IMR-90 (cell line): ENCODE measurements at regions of chr1 and their contacts with region 1.

Region 1: DNA sequence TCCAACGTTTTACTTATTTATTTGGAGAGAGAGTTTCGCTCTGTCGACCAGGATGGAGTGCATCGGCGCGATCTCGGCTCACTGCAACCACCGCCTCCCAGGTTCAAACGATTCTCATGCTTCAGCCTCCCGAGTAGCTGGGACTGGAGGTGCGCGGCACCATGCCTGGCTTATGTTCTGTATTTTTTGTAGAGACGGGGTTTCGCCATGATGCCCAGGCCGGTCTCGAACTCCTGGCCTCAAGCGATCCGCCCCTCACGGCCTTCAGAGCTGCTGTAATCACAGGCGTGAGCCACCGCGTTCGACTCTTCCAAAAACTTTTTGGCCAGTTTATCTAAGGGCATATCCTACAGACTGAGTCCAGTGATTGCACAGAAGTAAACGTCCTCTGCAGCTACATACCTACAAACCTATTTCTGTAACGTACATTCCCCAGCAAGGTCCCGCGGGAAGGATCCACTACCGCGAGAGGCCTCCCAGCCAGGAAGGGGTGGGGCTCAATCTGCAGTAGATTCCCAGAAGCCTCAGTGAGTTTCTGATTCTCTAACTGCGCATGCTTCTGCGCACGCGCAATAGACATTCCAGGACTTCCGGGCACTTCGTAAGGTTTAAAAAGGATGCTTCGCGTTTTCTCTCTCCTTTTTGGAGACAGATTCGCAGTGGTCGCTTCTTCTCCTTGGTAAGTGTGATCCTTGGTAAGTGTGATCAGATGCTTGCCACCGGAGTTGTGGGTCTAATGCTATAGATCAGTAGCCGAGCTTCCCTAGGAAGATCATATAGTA is at the start of gene RCC1:
- DNase-seq: peak; percentile 99
- ATAC-seq: peak; percentile 87
- H3K4me3 ChIP-seq: peak within 1 kb of the TSS; percentile 88
- H3K27ac ChIP-seq: peak within 1 kb of the TSS; percentile 81
- H3K4me1 ChIP-seq: peaks cover 13% of the 10 kb centered on the region
- H3K27me3 ChIP-seq: no peaks in the 10 kb centered on the region
- CTCF ChIP-seq: no peak
- POLR2A ChIP-seq: peak; percentile 100
- RAD21 ChIP-seq: no peak
- total RNA-seq, gene RCC1: 33.9 and 43.9 TPM in 2 replicates

Region 2: DNA sequence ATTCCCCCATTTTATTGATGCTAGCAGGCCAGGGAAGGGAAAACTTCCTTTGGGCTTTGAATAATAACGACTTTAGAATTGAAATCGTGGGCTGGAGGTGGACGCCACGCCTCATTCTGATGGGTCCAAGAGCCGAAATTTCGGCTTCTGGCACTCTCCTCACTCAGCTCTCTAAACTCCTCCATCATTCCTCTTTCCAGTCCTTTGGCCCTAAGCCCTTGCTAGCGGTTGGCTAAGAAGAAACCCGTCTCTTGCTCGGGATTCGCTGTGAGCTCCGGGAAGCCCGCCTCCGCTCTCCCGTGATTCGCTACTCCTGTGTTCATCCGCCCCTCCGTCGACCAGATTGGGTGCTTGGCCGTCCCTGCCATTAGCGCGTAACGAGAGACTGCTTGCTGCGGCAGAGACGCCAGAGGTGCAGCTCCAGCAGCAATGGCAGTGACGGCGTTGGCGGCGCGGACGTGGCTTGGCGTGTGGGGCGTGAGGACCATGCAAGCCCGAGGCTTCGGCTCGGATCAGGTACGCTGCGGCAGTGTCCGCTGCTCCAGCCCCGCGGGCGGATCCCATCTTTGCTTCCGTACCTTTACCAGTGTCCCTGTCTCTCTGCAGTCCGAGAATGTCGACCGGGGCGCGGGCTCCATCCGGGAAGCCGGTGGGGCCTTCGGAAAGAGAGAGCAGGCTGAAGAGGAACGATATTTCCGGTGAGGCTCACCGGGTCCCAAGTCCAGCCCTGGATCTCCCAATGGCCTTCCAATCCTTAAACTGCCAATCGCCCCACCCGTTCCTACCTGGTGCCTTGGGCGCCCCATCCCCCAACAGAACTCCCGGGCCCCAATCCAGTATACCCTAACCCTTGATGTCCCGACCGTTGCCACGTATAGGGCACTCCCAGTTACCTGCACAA is 269.6 kb before region 1 on chr1 and contains the start of gene ATP5IF1:
- CTCF ChIA-PET with region 1: no interaction called
- POLR2A ChIA-PET with region 1: no interaction called
- dilution Hi-C with region 1: no loop called
- in situ Hi-C with region 1: no loop called
- intact Hi-C with region 1: no loop called
- DNase-seq: peak; percentile 97
- ATAC-seq: peak; percentile 95
- H3K4me3 ChIP-seq: peak within 1 kb of the TSS; percentile 78
- H3K27ac ChIP-seq: peak within 1 kb of the TSS; percentile 68
- H3K4me1 ChIP-seq: peaks cover 2% of the 10 kb centered on the region
- H3K27me3 ChIP-seq: no peaks in the 10 kb centered on the region
- CTCF ChIP-seq: no peak
- POLR2A ChIP-seq: peak; percentile 89
- RAD21 ChIP-seq: no peak
- total RNA-seq, gene ATP5IF1: 33.7 and 120 TPM in 2 replicates

Region 3: DNA sequence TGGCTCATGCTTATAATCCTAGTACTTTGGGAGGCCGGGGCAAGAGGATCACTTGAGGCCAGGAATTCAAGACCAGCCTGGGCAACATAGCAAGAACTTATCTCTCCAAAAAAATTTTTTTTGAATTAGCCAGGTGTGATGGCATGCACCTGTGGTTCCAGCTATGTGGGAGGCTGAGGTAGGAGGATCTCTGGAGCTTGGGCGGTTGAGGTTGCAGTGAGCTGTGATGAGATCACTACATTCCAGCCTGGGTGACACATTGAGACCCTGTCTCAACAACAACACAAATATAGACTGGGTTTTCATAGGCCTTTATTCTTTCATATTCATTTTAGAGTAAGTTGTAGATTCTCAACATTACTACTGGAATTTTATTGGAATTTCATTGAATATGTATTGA is 164.0 kb before region 1 on chr1:
- CTCF ChIA-PET with region 1: no interaction called
- POLR2A ChIA-PET with region 1: interaction called, 10 read pairs
- dilution Hi-C with region 1: no loop called
- in situ Hi-C with region 1: no loop called
- intact Hi-C with region 1: no loop called
- DNase-seq: peak; percentile 45
- ATAC-seq: no peak
- H3K4me3 ChIP-seq: no peak overlapping the region
- H3K27ac ChIP-seq: no peak overlapping the region
- H3K4me1 ChIP-seq: no peaks in the 10 kb centered on the region
- H3K27me3 ChIP-seq: no peaks in the 10 kb centered on the region
- CTCF ChIP-seq: no peak
- POLR2A ChIP-seq: no peak
- RAD21 ChIP-seq: no peak

Region 4: DNA sequence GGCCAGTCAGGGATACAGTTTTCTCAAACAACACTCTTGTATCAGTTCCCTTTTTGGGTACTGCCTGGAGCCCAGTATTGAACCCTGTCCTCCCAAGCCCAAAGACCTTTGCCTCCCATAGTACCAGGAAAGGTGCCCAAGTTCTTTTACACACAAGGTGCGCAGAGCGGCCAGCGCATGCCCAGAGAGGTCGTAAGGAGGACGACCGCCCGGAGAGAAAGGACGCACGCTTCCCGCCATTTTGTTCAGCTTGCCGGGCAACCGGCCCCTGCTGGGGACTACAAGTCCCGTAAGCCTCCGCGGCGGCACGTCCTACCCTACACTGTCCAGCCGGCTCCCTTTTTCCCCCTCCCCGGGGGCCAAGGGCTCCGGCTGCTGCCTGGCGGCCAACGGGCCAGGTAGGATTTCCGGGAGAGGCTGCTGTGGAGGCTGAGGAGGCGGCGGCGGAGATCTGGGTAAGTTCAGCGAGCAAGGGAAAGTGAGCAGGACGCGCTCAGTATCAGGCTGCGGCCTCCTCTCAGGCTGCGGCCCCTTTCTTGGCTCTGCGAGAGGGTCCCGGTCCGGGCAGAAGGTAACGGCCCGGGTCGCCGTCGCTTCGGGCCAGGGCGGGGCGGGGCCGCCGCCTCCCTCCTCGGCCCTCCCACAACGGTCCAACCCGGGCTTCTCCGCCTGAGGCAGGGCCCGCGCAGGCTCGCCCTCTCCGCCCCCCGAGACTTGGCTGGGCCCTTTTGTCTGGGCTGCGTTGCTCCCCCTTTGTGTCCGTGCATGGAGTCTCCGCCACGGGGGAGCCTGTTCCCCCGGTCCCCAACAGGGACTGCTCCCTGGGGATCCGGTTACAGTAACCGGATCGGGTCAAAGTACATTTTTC is 136.0 kb before region 1 on chr1 and contains the start of gene PHACTR4:
- CTCF ChIA-PET with region 1: no interaction called
- POLR2A ChIA-PET with region 1: interaction called, 11 read pairs
- dilution Hi-C with region 1: no loop called
- in situ Hi-C with region 1: no loop called
- intact Hi-C with region 1: no loop called
- DNase-seq: peak; percentile 91
- ATAC-seq: peak; percentile 95
- H3K4me3 ChIP-seq: peak within 1 kb of the TSS; percentile 66
- H3K27ac ChIP-seq: peak within 1 kb of the TSS; percentile 93
- H3K4me1 ChIP-seq: 0 out of 2 replicates have a peak, but pooled peaks cover 5% of the 10 kb centered on the region
- H3K27me3 ChIP-seq: no peaks in the 10 kb centered on the region
- CTCF ChIP-seq: no peak
- POLR2A ChIP-seq: peak; percentile 76; the same call in 1 of the 2 replicates
- RAD21 ChIP-seq: no peak
- total RNA-seq, gene PHACTR4: 6.9 and 7.5 TPM in 2 replicates

Region 5: GRCh38 chr1:28409090-28409489 is 96.5 kb before region 1 on chr1:
- CTCF ChIA-PET with region 1: interaction called, 4 read pairs
- POLR2A ChIA-PET with region 1: interaction called, 3 read pairs
- dilution Hi-C with region 1: no loop called
- in situ Hi-C with region 1: no loop called
- intact Hi-C with region 1: loop called (anchors 5 kb)
- DNase-seq: no peak
- ATAC-seq: no peak
- H3K4me3 ChIP-seq: no peak overlapping the region
- H3K27ac ChIP-seq: no peak overlapping the region
- H3K4me1 ChIP-seq: no peaks in the 10 kb centered on the region
- H3K27me3 ChIP-seq: no peaks in the 10 kb centered on the region
- CTCF ChIP-seq: no peak
- POLR2A ChIP-seq: no peak
- RAD21 ChIP-seq: no peak

Region 6: DNA sequence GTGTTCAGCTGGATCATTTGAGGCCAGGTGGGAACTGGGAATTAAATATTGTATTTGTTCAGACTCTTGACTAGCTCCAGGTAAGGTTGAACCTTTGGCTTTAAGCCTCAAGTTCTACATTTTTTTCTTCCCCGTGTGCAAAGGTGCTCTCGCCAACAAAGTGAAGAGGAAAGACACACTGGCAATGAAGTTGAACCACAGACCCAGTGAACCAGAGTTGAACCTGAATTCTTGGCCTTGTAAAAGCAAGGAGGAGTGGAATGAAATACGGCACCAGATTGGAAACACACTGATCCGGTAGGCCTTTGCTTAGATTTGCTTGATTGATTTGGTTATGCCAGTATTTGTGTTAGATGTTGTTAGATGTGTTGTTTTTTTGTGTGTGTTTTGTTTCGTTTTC is 25.3 kb before region 1 on chr1:
- CTCF ChIA-PET with region 1: no interaction called
- POLR2A ChIA-PET with region 1: no interaction called
- dilution Hi-C with region 1: no loop called
- in situ Hi-C with region 1: no loop called
- intact Hi-C with region 1: no loop called
- DNase-seq: no peak
- ATAC-seq: no peak
- H3K4me3 ChIP-seq: no peak overlapping the region
- H3K27ac ChIP-seq: no peak overlapping the region
- H3K4me1 ChIP-seq: no peaks in the 10 kb centered on the region
- H3K27me3 ChIP-seq: no peaks in the 10 kb centered on the region
- CTCF ChIP-seq: no peak
- POLR2A ChIP-seq: no peak
- RAD21 ChIP-seq: no peak

Region 7: DNA sequence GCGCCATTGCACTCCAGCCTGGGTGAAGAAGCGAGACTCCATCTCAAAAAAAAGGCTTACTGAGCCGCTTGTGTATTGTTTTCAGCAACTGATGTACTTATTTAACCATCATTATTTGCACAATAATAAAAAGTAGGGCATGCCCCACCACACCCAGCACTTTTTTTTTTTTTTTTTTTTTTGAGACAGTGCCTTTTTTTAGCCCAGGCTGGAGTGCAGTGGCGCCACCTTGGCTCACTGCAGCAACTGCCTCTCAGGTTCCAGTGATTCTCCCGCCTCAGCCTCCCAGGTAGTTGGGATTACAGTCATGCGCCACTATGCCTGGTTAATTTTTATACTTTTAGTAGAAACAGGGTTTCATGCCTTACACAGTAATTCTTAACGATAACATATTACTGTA is 35.1 kb after region 1 on chr1:
- CTCF ChIA-PET with region 1: no interaction called
- POLR2A ChIA-PET with region 1: interaction called, 12 read pairs
- dilution Hi-C with region 1: no loop called
- in situ Hi-C with region 1: no loop called
- intact Hi-C with region 1: no loop called
- DNase-seq: no peak
- ATAC-seq: no peak
- H3K4me3 ChIP-seq: no peak overlapping the region
- H3K27ac ChIP-seq: no peak overlapping the region
- H3K4me1 ChIP-seq: no peaks in the 10 kb centered on the region
- H3K27me3 ChIP-seq: no peaks in the 10 kb centered on the region
- CTCF ChIP-seq: peak; percentile 5; the same call in 1 of the 2 replicates
- POLR2A ChIP-seq: no peak
- RAD21 ChIP-seq: no peak

Region 8: GRCh38 chr1:28631713-28632112 is 126.1 kb after region 1 on chr1:
- CTCF ChIA-PET with region 1: no interaction called
- POLR2A ChIA-PET with region 1: no interaction called
- dilution Hi-C with region 1: no loop called
- in situ Hi-C with region 1: no loop called
- intact Hi-C with region 1: no loop called
- DNase-seq: no peak
- ATAC-seq: no peak
- H3K4me3 ChIP-seq: no peak overlapping the region
- H3K27ac ChIP-seq: no peak overlapping the region
- H3K4me1 ChIP-seq: no peaks in the 10 kb centered on the region
- H3K27me3 ChIP-seq: no peaks in the 10 kb centered on the region
- CTCF ChIP-seq: no peak
- POLR2A ChIP-seq: no peak
- RAD21 ChIP-seq: no peak

Region 9: GRCh38 chr1:29415156-29415830 is 909.7 kb after region 1 on chr1:
- CTCF ChIA-PET with region 1: no interaction called
- POLR2A ChIA-PET with region 1: no interaction called
- dilution Hi-C with region 1: no loop called
- in situ Hi-C with region 1: no loop called
- intact Hi-C with region 1: no loop called
- DNase-seq: no peak
- ATAC-seq: no peak
- H3K4me3 ChIP-seq: no peak overlapping the region
- H3K27ac ChIP-seq: no peak overlapping the region
- H3K4me1 ChIP-seq: no peaks in the 10 kb centered on the region
- H3K27me3 ChIP-seq: no peaks in the 10 kb centered on the region
- CTCF ChIP-seq: no peak
- POLR2A ChIP-seq: no peak
- RAD21 ChIP-seq: no peak